PC-3 (cell line): ENCODE measurements at regions of chr14 and their contacts with region 1.

Region 1: GRCh38 chr14:20503898-20504297 is 1.4 kb upstream of the RNASE10 start:
- DNase-seq: no peak
- ATAC-seq: no peak
- H3K4me3 ChIP-seq: no peak overlapping the region
- H3K27ac ChIP-seq: no peak overlapping the region
- H3K4me1 ChIP-seq: peaks cover 21% of the 10 kb centered on the region
- H3K27me3 ChIP-seq: no peaks in the 10 kb centered on the region
- CTCF ChIP-seq: no peak

Region 2: DNA sequence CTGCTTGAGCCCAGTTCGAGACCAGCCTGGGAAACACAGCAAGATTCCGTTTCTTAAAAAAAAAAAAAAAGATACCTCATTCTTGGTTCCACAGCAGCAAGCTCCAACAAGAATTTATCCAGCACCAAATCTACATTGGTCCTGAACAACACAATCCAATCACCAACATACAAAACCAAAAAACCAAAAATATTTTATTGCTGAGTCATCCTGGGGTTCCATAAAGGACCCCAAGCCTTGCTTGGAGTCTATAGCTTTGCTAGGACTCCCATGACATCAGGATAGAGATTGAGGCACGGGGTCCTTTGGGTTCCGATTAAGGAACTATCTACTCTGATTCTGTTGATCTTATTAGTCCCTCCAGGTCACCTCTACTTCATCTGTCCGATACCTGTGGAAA is 57.0 kb before region 1 on chr14:
- CTCF ChIA-PET with region 1: no interaction called
- POLR2A ChIA-PET with region 1: no interaction called
- intact Hi-C with region 1: no loop called
- DNase-seq: no peak
- ATAC-seq: no peak
- H3K4me3 ChIP-seq: no peak overlapping the region
- H3K27ac ChIP-seq: no peak overlapping the region
- H3K4me1 ChIP-seq: no peaks in the 10 kb centered on the region
- H3K27me3 ChIP-seq: no peaks in the 10 kb centered on the region
- CTCF ChIP-seq: no peak

Region 3: DNA sequence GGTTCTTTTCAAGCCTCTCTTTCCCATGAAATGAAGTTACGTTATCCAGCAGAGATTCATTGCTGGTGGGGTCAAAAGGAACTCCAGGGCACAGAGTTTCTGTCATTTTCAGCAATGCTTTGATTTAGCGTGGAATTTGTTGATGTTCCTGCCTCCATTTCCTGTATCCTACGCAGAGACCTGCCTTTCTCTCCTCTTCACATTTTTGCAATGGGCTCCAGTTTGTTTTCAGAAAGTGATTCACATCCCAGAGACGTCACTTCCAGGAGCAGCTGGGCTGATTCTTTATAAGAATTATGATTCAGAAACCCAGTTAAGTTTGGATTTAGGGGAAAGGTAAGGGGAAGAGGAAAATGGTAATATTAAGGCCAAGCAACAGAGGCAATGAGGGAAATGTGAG is 13.0 kb after region 1 on chr14:
- CTCF ChIA-PET with region 1: no interaction called
- POLR2A ChIA-PET with region 1: no interaction called
- intact Hi-C with region 1: loop called (anchors 2 kb)
- DNase-seq: peak; percentile 84
- ATAC-seq: peak; percentile 79
- H3K4me3 ChIP-seq: peak overlapping the region; percentile 27; the same call in 1 of the 2 replicates
- H3K27ac ChIP-seq: peak overlapping the region; percentile 89
- H3K4me1 ChIP-seq: peaks cover 30% of the 10 kb centered on the region
- H3K27me3 ChIP-seq: no peaks in the 10 kb centered on the region
- CTCF ChIP-seq: no peak

Region 4: GRCh38 chr14:21071225-21072030 is 567.5 kb after region 1 on chr14:
- CTCF ChIA-PET with region 1: no interaction called
- POLR2A ChIA-PET with region 1: no interaction called
- intact Hi-C with region 1: no loop called
- DNase-seq: peak; percentile 11
- ATAC-seq: peak; percentile 5
- H3K4me3 ChIP-seq: peak overlapping the region; percentile 72
- H3K27ac ChIP-seq: no peak overlapping the region
- H3K4me1 ChIP-seq: peaks cover 6% of the 10 kb centered on the region; the same call in 1 of the 2 replicates
- H3K27me3 ChIP-seq: peaks cover 44% of the 10 kb centered on the region
- CTCF ChIP-seq: no peak